OCI-LY7 (cell line): ENCODE measurements at regions of chr6 and their contacts with region 1.

Region 1: DNA sequence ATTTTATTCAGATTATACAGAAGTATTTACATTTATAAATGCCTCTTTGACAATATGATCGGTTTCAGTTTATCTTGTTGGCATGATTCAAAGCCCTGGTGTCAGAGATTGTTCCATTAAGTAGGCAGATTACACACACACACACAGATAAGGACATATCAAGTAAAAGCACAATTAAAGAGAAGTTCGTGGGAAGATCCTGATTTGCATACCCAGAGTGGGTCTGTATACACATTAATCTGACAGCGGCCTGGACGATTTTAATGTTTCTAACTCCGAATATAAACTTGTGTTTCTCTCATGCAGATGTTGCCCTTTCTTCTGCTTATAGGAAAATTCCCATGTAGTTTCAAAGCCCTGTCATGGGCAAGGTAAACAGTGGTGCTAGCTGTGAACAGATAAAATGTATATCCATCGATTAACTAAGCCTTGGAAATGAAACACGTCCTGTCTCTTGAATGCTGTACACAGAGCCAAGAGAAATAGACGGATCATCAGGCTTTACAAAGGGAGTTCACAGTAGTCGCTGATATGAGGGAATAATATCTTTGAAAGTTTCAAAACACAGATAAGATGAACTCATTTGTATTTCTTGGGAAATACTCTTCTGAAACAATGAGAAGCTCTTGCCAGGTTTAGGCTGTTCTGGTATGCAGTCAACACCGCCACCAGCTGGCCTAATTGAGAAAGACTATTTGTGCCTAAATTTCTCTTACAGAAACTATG is 108.2 kb upstream of the GMDS start:
- DNase-seq: peak; percentile 55
- H3K4me3 ChIP-seq: no peak overlapping the region
- H3K27ac ChIP-seq: no peak overlapping the region
- H3K4me1 ChIP-seq: no peaks in the 10 kb centered on the region
- CTCF ChIP-seq: peak; percentile 94

Region 2: DNA sequence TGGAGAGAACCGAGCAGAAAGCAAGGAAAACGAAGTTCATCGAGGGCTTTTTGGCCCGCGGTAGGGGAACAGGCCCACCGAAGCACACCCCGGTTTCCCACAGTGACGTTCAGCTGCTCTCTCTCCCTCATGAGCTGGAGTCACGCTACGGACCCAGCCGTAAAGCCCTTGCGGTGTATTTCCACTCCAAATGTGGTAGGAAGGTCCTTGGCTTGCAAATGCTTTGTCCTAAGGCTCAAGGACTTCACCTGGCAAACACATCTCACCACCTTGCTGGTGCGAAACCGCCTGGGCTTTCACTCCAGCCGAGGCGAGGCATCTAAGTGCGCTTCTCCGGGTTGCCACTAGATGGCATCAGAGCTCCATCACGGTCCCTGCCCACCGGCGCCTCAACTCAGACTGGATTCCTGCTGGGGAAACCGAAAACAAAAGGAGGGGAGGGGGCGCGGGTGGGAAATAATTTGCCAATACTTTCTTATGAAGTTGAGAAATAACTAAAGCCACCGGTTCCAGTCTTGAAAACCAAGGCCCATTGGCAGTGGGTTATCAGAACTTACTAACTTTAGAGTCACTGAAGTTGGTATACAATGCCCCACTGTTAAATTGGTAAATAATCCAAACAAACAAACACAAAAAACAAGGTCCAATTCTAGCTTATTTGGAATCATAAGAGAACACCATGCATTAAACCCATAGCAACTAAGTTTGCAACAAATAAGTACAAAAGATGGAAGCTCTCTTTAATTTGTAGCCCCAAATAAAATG is 757.3 kb before region 1 on chr6:
- CTCF ChIA-PET with region 1: no interaction called
- POLR2A ChIA-PET with region 1: no interaction called
- intact Hi-C with region 1: loop called (anchors 2 kb)
- DNase-seq: peak; percentile 54
- H3K4me3 ChIP-seq: no peak overlapping the region
- H3K27ac ChIP-seq: no peak overlapping the region
- H3K4me1 ChIP-seq: no peaks in the 10 kb centered on the region
- CTCF ChIP-seq: peak; percentile 93

Region 3: GRCh38 chr6:1609648-1610496 is 743.7 kb before region 1 on chr6 and contains the start of gene FOXC1:
- CTCF ChIA-PET with region 1: no interaction called
- POLR2A ChIA-PET with region 1: no interaction called
- intact Hi-C with region 1: loop called (anchors 2 kb)
- DNase-seq: no peak
- H3K4me3 ChIP-seq: no peak within 1 kb of the TSS
- H3K27ac ChIP-seq: no peak within 1 kb of the TSS
- H3K4me1 ChIP-seq: no peaks in the 10 kb centered on the region
- CTCF ChIP-seq: no peak
- total RNA-seq, gene FOXC1: not detected in 2 replicates

Region 4: GRCh38 chr6:1995651-1996103 is 357.9 kb before region 1 on chr6:
- CTCF ChIA-PET with region 1: no interaction called
- POLR2A ChIA-PET with region 1: no interaction called
- intact Hi-C with region 1: no loop called
- DNase-seq: peak; percentile 8
- H3K4me3 ChIP-seq: no peak overlapping the region
- H3K27ac ChIP-seq: no peak overlapping the region
- H3K4me1 ChIP-seq: no peaks in the 10 kb centered on the region
- CTCF ChIP-seq: peak; percentile 55

Region 5: DNA sequence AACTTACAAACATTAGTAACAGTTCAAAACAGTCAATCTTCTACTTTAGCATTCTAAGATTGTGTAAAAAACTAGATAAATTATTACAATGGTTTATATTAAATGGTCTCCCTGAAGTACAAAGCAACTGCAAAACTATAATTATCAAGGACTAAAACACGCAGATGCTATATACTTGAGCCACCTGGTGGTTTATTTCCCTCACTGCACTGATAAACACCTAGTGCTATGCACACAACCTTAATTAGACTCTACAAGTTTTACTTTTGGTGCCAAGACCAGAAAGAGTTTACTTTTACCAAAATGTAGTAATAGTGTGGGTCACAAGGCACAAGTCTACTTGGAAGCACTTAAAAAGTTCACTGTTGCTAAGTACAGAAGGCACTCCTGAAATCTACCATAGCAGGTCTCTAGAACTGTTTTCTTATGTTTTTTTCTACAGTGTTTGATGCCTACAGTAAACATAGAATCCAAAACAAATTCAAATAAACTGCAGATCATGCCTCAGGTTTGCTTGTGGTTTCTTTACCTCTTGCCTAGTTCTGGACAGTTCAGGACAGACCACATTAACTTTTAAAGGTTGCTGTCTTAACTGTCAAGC is 157.4 kb before region 1 on chr6:
- CTCF ChIA-PET with region 1: no interaction called
- POLR2A ChIA-PET with region 1: no interaction called
- intact Hi-C with region 1: no loop called
- DNase-seq: peak; percentile 60
- H3K4me3 ChIP-seq: no peak overlapping the region
- H3K27ac ChIP-seq: no peak overlapping the region
- H3K4me1 ChIP-seq: no peaks in the 10 kb centered on the region
- CTCF ChIP-seq: peak; percentile 89

Region 6: DNA sequence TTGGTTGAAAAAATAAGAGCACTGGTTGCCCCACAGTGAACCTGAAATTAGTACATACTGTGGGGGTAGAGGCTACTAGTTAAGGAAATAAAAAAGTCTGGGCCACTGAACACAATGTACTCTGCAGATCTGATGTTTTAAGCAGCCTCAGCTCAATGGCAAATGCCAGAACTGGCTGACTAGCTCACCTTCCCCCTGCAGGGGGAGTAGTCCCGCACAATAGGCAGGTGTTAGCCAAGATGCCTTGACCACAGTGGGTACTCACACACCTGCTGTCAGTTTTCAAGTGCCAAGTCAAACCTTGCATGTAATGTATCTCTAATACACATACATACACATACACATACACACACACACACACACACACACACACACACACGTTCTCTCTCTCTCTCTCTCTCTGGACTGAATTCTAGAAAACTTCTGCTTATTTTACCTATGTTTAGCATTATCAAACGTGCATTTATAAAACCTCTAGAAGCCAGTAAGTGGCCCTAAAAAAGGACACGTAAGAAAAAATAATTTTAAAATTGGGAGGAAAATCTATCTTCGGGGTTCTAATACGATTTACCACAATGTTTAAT is 144.3 kb before region 1 on chr6:
- CTCF ChIA-PET with region 1: no interaction called
- POLR2A ChIA-PET with region 1: no interaction called
- intact Hi-C with region 1: loop called (anchors 1 kb)
- DNase-seq: peak; percentile 59
- H3K4me3 ChIP-seq: no peak overlapping the region
- H3K27ac ChIP-seq: no peak overlapping the region
- H3K4me1 ChIP-seq: no peaks in the 10 kb centered on the region
- CTCF ChIP-seq: peak; percentile 79